Psoas muscle (tissue), 8 donors: ENCODE measurements at regions of chr2 and their contacts with region 1.

Region 1: GRCh38 chr2:24304631-24305030 is 55.7 kb downstream of the ITSN2 start:
- DNase-seq: no peak
- ATAC-seq: peak in 3 of 4 donors; percentile 16 to 35 (median 28)
- H3K4me3 ChIP-seq: no peak overlapping the region
- H3K27ac ChIP-seq: peak overlapping the region; percentile 80
- H3K4me1 ChIP-seq: peaks cover 17% of the 10 kb centered on the region
- H3K27me3 ChIP-seq: no peaks in the 10 kb centered on the region
- CTCF ChIP-seq: no peak

Region 2: DNA sequence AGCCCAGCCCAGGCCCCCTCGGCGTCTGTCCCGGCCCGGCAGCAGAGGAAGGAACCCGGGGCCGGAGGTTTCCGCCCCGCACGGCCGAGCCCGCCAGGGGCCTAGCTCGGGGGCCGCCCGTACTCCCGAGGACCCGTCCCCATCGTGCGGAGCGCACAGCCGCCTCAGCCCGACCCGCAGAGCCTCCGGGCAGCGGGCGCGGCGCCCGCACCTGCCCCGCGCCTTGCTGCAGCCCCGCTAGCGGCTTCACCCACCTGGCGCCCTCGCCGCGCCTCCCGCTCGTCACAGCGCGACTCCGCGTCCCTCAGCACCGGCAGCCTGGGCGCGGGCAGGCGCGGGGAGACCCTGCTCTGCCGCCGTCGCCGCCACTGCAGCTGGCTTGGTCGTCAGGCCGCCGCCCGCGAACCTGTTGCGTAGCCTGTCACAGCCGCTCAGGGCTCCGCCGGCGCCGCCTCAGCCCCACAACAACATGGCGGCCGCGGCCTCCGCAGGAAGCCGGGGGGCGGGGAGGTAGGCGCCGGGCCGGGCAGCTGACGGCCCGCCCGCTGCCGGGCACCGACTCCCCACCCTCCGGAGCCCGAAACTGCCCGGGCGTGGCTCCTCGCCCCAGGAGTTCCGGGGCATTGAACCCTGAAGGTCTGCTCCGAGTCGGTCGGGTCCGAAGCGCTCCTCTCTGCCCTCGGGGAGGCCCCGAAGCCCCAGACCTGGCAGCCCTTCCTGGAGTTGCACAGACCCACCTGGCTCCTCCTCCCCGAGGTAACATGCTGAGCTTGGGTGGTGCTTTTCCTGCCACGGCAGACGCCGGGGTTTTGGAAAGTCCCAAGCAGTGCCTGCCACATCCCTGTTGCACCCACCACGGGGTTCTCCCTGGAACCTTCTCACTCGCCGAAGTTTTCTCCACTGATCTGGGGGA is 55.7 kb after region 1 on chr2 and contains the start of gene ITSN2:
- intact Hi-C with region 1: loop called in 1 of 2 experiments (anchors 5 kb)
- DNase-seq: peak; percentile 84 to 90
- ATAC-seq: peak; percentile 78 to 86 (median 82)
- H3K4me3 ChIP-seq: peak within 1 kb of the TSS; percentile 91
- H3K27ac ChIP-seq: peak within 1 kb of the TSS; percentile 96
- H3K4me1 ChIP-seq: peaks cover 31% of the 10 kb centered on the region
- H3K27me3 ChIP-seq: no peaks in the 10 kb centered on the region
- CTCF ChIP-seq: no peak
- total RNA-seq, gene ITSN2: 33.5 to 71.7 (median 39.9) TPM